ENCODE measurements at regions of chr7 and their contacts with region 1.

Region 1: GRCh38 chr7:123797673-123798527 is 47.1 kb upstream of the HYAL4 start:
- DNase-seq: peak; percentile 96
- H3K4me3 ChIP-seq: peak overlapping the region; percentile 11 to 47 (median 18)
- H3K27ac ChIP-seq: peak overlapping the region; percentile 51
- H3K4me1 ChIP-seq: peaks cover 13% of the 10 kb centered on the region
- H3K27me3 ChIP-seq: no peaks in the 10 kb centered on the region
- CTCF ChIP-seq: peak; percentile 36 to 50

Region 2: DNA sequence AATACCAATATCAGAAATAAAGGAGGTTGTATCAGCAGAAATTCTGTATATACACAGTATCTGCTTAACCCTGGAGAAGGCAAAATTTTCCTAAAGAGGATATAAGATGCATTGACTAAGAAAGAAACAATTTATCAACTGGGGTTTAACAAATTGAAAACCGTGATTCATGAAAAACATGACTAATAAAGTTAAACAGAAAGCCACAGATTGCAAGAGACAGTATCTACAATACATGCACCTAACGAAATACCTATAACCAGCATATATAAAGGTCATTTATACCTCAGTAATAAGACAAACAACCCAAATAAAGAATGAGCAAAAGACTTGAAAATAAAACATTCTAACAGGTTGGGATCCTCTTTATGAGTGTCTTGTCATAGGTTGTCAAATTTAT is 365.3 kb before region 1 on chr7:
- CTCF ChIA-PET with region 1: no interaction called
- dilution Hi-C with region 1: no loop called
- in situ Hi-C with region 1: no loop called
- intact Hi-C with region 1: no loop called
- DNase-seq: peak; percentile 73
- H3K4me3 ChIP-seq: no peak overlapping the region
- H3K27ac ChIP-seq: no peak overlapping the region
- H3K4me1 ChIP-seq: no peaks in the 10 kb centered on the region
- H3K27me3 ChIP-seq: no peaks in the 10 kb centered on the region
- CTCF ChIP-seq: no peak

Region 3: DNA sequence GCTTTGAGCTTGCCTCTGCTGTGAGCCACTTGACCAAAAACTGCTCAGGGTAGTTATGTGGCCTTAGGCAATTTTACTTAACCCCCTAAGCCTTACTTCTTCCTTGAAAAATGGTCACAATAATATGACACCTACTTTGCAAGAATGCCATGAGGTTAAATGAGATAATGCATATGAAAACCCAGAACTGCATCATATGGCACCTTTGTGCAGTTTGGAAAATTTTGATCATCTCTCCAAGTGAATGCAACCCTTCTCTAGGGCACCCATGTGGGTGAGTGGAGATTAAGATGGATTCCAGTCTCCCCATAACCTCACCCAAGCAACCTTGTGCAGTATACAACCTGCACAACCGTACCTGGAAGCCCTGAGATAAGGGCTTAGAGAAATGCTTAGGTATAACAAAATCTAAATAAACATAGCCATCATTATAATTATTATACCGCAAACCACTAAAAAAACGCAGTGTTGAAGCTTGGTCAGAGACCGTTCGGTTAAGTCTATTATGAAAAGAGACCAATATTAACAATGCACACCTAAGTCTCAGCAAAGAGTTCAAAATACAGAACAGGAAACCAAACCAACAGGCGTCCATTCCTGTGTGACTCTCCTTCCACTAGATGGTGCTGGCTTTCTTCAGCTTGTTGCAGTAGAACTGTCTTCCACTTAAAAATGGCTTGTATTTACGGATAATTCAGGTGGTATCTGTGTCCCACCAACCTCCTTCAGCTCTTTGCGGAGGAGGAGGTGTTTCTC is 217.3 kb before region 1 on chr7:
- CTCF ChIA-PET with region 1: no interaction called
- dilution Hi-C with region 1: no loop called
- in situ Hi-C with region 1: no loop called
- intact Hi-C with region 1: loop called (anchors 5 kb)
- DNase-seq: peak; percentile 41
- H3K4me3 ChIP-seq: peak overlapping the region in 1 of 3 experiments; percentile 27
- H3K27ac ChIP-seq: no peak overlapping the region
- H3K4me1 ChIP-seq: peaks cover 6% of the 10 kb centered on the region
- H3K27me3 ChIP-seq: no peaks in the 10 kb centered on the region
- CTCF ChIP-seq: peak; percentile 87 to 93

Region 4: GRCh38 chr7:123748734-123749536 is 49.0 kb before region 1 on chr7 and contains the start of gene WASL:
- CTCF ChIA-PET with region 1: no interaction called
- dilution Hi-C with region 1: no loop called
- in situ Hi-C with region 1: no loop called
- intact Hi-C with region 1: loop called (anchors 1 kb)
- DNase-seq: peak; percentile 90
- H3K4me3 ChIP-seq: peak within 1 kb of the TSS; percentile 61 to 98 (median 76)
- H3K27ac ChIP-seq: peak within 1 kb of the TSS; percentile 94
- H3K4me1 ChIP-seq: peaks cover 7% of the 10 kb centered on the region
- H3K27me3 ChIP-seq: no peaks in the 10 kb centered on the region
- CTCF ChIP-seq: peak in 1 of 2 donors; percentile 6
- total RNA-seq, gene WASL: 26.3 to 45.6 TPM

Region 5: DNA sequence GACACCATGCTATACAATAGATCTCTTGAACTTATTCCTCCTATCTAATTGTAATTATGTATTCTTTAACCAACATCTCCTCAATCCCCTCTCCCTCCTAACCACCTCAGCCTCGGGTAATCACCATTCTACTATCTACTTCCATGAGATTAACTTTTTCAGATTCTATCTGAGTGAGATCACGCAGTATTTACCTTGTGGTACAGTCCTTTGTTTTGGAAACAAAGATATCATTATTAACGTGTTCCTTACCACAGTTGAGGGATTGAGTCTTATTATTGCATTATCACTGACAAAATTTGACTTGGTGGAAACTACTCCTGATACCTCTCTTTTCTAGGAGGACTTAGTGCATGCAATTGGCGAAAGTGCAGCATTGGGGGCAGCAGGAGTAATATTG is 21.1 kb after region 1 on chr7:
- CTCF ChIA-PET with region 1: no interaction called
- dilution Hi-C with region 1: no loop called
- in situ Hi-C with region 1: no loop called
- intact Hi-C with region 1: loop called (anchors 1 kb)
- DNase-seq: peak; percentile 75
- H3K4me3 ChIP-seq: peak overlapping the region in 1 of 3 experiments; percentile 1
- H3K27ac ChIP-seq: peak overlapping the region; percentile 98
- H3K4me1 ChIP-seq: peaks cover 9% of the 10 kb centered on the region
- H3K27me3 ChIP-seq: no peaks in the 10 kb centered on the region
- CTCF ChIP-seq: no peak

Region 6: DNA sequence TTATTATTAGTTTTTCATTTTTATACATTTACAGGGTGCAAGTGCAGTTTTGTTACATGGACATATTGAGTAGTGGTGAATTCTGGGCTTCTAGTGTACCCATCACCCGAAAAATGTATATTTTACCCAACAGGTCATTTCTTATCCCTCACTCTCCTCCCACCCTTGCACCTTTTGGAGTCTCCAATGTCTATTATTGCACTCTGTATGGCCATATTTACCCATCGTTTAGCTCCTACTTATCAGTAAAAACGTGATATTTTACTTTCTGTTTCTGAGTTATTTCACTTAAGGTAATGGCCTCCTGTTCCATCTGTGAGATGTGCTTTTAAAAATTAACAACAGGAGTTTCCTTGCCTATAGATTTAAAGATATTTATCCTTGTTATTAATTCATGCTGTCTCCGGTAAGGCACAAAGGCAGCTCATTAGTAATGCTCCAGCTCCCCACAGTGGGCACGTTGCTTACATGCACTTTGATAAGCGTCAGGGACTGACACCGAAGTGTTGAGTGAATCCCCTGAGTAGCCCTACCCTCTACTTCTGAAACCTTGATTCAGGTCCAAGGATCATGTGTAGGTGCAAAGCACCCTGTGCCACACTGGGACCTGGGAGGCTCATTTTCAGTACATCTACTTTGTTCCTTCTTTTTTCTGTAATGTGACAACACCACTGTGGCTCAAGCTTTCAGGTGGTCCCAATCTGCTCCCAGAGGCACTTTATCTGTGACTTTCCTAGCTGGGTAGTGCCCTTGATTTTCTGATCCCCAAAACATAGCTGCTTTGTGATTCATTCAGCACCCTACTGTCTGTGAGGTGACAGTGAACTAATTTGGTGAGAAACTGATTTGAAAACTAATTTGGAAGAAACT is 74.3 kb after region 1 on chr7:
- CTCF ChIA-PET with region 1: no interaction called
- dilution Hi-C with region 1: loop called (anchors 5 kb)
- in situ Hi-C with region 1: loop called (anchors 5 kb)
- intact Hi-C with region 1: loop called (anchors 1 kb)
- DNase-seq: peak; percentile 45
- H3K4me3 ChIP-seq: no peak overlapping the region
- H3K27ac ChIP-seq: no peak overlapping the region
- H3K4me1 ChIP-seq: no peaks in the 10 kb centered on the region
- H3K27me3 ChIP-seq: no peaks in the 10 kb centered on the region
- CTCF ChIP-seq: peak; percentile 73 to 76